CD8-positive, alpha-beta memory T cell (primary cell): ENCODE measurements at regions of chr16 and their contacts with region 1.

Region 1: DNA sequence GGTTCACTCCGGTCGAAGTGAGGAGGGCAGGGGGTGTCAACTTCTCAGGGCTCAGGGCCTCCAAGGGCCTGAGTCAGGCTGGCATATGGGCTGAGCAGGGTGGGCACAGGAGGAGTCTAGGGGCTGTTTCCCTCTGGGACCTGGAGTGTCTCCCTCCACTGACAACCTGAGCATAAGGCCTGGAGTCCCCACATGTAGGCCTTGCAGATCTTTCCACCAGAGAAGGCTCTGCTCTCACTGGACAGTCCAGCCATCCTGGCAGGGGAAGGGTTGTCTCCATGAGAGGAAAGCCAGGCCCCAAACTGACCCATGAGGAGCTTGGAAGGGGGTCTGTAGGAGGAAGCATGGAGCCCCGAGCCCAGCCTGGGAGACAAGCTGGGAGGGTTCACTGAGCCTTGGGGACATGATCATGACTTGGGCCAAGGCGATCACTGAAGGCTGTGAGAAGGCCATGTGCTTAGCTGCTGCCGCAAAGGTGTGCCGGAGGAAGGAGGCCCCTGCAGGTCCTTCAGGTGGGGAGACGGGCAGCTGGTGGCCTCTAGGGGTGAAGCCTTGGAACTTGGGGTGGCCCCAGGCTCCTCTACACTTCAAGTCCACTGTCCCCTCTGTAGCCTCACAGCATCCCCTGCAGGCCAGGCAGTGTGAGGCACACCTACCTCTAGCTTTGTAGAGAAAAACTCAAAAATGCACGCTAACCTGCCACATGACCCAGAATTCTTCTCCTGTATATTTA is 9.9 kb downstream of the CMTM2 start:
- DNase-seq: peak; percentile 51 to 86 (median 58)
- H3K4me3 ChIP-seq: no peak overlapping the region
- H3K4me3 Mint-ChIP-seq: peak overlapping the region; percentile 51 to 87 (median 85)
- H3K27ac ChIP-seq: no peak overlapping the region
- H3K27ac Mint-ChIP-seq: peak overlapping the region; percentile 45 to 92 (median 84)
- H3K4me1 ChIP-seq: peaks cover 20% of the 10 kb centered on the region
- H3K4me1 Mint-ChIP-seq: peaks cover 17 to 21% (median 20%) of the 10 kb centered on the region in 3 donors
- H3K27me3 ChIP-seq: no peaks in the 10 kb centered on the region
- H3K27me3 Mint-ChIP-seq: peaks cover 0 to 3% of the 10 kb centered on the region in 2 donors

Region 2: GRCh38 chr16:66406534-66407221 is 182.5 kb before region 1 on chr16:
- CTCF ChIA-PET with region 1: interaction called, 61 read pairs
- POLR2A ChIA-PET with region 1: interaction called, 3 read pairs
- DNase-seq: peak; percentile 74 to 89 (median 82)
- H3K4me3 ChIP-seq: peak overlapping the region; percentile 75
- H3K4me3 Mint-ChIP-seq: peak overlapping the region; percentile 81 to 93 (median 85)
- H3K27ac ChIP-seq: no peak overlapping the region
- H3K27ac Mint-ChIP-seq: peak overlapping the region in 4 of 8 donors; percentile 29 to 76 (median 64)
- H3K4me1 ChIP-seq: peaks cover 21% of the 10 kb centered on the region
- H3K4me1 Mint-ChIP-seq: peaks cover 25 to 29% (median 28%) of the 10 kb centered on the region in 3 donors
- H3K27me3 ChIP-seq: no peaks in the 10 kb centered on the region
- H3K27me3 Mint-ChIP-seq: peaks cover 0 to 12% of the 10 kb centered on the region in 2 donors

Region 3: GRCh38 chr16:66511615-66512500 is 77.3 kb before region 1 on chr16:
- CTCF ChIA-PET with region 1: interaction called, 20 read pairs
- POLR2A ChIA-PET with region 1: no interaction called
- DNase-seq: no peak
- H3K4me3 ChIP-seq: no peak overlapping the region
- H3K4me3 Mint-ChIP-seq: peak overlapping the region in 1 of 7 donors; percentile 8
- H3K27ac ChIP-seq: no peak overlapping the region
- H3K27ac Mint-ChIP-seq: peak overlapping the region in 7 of 8 donors; percentile 16 to 86 (median 66)
- H3K4me1 ChIP-seq: peaks cover 25% of the 10 kb centered on the region
- H3K4me1 Mint-ChIP-seq: peaks cover 33 to 44% (median 35%) of the 10 kb centered on the region in 3 donors
- H3K27me3 ChIP-seq: no peaks in the 10 kb centered on the region
- H3K27me3 Mint-ChIP-seq: no peaks in the 10 kb centered on the region

Region 4: DNA sequence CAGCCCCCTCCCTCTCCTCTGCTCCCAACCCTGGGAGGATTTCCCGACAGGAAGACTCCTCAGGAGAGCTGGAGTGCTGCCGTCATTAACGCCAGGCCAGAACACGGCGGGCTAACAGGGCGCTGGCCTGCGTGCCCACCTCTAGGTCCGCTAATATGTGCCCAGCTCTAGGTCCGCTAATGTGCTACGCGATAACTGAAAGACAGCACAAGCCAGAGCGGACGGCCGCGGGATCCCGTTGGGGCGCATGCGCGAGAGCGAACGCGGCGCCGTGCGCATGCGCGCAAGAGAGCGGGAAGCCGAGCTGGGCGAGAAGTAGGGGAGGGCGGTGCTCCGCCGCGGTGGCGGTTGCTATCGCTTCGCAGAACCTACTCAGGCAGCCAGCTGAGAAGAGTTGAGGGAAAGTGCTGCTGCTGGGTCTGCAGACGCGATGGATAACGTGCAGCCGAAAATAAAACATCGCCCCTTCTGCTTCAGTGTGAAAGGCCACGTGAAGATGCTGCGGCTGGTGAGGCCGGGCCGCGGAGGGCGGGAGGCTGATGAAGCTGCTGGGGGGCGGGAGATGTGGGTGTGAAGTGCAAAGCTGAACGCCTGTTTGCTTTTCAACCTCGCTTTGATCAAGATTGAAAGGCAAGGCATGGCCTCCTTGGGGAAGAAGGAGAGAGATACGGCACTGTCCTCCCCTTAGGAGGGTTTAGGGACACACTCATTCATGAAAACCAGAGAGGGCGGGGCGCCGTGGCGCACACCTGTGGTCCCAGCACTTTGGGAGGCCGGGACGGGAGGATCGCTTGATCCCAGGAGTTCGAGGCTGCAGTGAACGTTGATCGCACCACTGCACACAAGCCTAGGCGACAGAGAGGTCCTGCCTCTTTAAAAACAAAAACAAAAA is 36.6 kb before region 1 on chr16 and contains the start of gene CKLF:
- CTCF ChIA-PET with region 1: interaction called, 14 read pairs
- POLR2A ChIA-PET with region 1: interaction called, 5 read pairs
- DNase-seq: peak; percentile 85 to 94 (median 92)
- H3K4me3 ChIP-seq: peak within 1 kb of the TSS; percentile 87
- H3K4me3 Mint-ChIP-seq: peak within 1 kb of the TSS; percentile 90 to 98 (median 97)
- H3K27ac ChIP-seq: peak within 1 kb of the TSS; percentile 85
- H3K27ac Mint-ChIP-seq: peak within 1 kb of the TSS; percentile 92 to 98 (median 96)
- H3K4me1 ChIP-seq: peaks cover 72% of the 10 kb centered on the region
- H3K4me1 Mint-ChIP-seq: peaks cover 76 to 88% (median 86%) of the 10 kb centered on the region in 3 donors
- H3K27me3 ChIP-seq: no peaks in the 10 kb centered on the region
- H3K27me3 Mint-ChIP-seq: peaks cover 0 to 5% of the 10 kb centered on the region in 2 donors
- total RNA-seq, gene CKLF: 118 to 121 TPM

Region 5: DNA sequence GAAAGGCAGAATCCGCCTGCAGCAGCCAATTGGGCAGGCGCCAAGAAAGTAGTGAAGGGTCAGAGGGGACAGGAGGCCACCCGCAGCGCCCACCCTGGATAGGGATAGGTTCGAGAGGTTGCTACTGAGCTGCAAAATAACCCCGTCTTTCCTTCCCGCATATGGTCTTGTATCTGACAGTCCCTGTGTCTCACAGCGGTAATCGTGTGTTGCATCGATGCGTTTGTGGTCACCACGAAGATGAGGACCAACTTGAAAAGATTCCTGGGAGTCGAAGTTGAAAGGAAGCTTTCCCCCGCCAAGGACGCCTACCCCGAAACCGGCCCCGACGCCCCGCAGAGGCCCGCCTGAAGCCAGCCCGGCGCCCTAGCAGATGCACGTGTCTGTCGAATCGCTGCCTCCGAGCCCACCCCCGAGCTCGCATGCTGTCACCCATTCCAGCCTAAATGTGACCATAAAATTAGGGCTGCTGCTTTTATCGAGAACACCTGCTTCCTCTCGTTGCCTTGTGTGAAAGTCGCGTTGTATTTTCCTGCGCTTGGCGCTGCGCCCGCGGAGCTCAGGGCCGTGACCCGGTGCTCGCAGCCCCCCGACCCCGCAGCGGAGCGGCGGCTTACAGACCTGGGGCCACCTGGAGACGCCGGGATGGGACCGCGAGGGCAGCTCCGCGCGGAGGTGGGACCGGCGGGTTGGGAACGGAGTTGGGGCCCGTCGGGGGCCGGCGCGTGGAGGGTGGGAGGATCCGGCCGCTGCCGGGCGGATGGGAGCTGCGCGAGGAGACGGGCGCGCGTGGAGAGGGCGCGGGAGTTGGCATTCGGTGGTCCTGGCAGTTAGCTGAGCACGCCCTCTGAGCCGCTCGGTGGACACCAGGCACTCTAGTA is 10.3 kb before region 1 on chr16 and contains the start of gene CMTM2:
- CTCF ChIA-PET with region 1: interaction called, 15 read pairs
- POLR2A ChIA-PET with region 1: no interaction called
- DNase-seq: peak in 2 of 5 donors; percentile 11 to 21
- H3K4me3 ChIP-seq: peak within 1 kb of the TSS; percentile 44
- H3K4me3 Mint-ChIP-seq: peak within 1 kb of the TSS; percentile 65 to 89 (median 75)
- H3K27ac ChIP-seq: no peak within 1 kb of the TSS
- H3K27ac Mint-ChIP-seq: peak within 1 kb of the TSS in 3 of 8 donors; percentile 14 to 82 (median 58)
- H3K4me1 ChIP-seq: no peaks in the 10 kb centered on the region
- H3K4me1 Mint-ChIP-seq: peaks cover 14 to 38% (median 15%) of the 10 kb centered on the region in 3 donors
- H3K27me3 ChIP-seq: no peaks in the 10 kb centered on the region
- H3K27me3 Mint-ChIP-seq: peaks cover 4 to 13% of the 10 kb centered on the region in 2 donors
- total RNA-seq, gene CMTM2: 0.22 to 0.24 TPM